GM10248 (cell line): ENCODE measurements at regions of chr2 and their contacts with region 1.

Region 1: DNA sequence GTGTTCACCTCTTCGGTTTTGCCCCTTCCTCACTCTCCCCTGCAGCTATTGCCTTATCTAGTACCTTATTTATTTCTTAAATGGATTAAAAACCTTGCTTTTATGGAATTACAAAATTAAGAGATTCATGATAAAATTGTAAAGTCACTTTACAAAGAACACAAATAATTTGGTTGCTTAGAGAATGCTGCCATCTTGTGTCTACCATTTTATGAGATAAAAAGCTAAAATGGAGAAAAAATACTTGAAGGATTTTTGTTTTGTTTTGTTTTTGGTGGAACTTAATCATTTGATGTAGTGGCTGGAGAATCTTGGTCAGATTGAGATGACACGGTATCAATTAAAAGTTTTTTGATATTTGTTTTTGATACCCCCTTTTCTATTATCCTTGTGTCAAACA is 69.6 kb downstream of the R3HDM1 start:
- DNase-seq: no peak
- CTCF ChIP-seq: no peak

Region 2: DNA sequence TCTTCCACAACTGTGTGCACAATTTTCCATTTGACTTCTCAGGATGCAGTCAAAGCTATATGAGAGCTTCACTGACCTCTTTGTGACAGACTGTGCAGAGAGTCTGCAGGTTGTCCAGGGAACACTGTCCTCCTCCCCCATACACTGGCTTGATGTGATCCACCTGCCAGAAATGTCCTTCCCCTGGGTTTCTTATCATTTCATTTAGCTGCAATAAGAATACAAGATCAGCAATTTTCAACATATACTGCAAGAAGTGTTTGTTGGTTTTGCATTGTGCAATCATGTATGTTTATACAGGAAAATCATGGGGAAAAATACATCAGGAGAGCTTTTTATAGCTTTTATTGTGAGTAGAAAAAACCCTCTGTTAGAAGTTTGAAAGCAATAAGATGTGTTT is 398.2 kb before region 1 on chr2:
- CTCF ChIA-PET with region 1: no interaction called
- POLR2A ChIA-PET with region 1: no interaction called
- DNase-seq: no peak
- CTCF ChIP-seq: no peak

Region 3: GRCh38 chr2:135585586-135585985 is 15.3 kb before region 1 on chr2:
- CTCF ChIA-PET with region 1: interaction called, 15 read pairs
- POLR2A ChIA-PET with region 1: no interaction called
- DNase-seq: no peak
- CTCF ChIP-seq: no peak

Region 4: DNA sequence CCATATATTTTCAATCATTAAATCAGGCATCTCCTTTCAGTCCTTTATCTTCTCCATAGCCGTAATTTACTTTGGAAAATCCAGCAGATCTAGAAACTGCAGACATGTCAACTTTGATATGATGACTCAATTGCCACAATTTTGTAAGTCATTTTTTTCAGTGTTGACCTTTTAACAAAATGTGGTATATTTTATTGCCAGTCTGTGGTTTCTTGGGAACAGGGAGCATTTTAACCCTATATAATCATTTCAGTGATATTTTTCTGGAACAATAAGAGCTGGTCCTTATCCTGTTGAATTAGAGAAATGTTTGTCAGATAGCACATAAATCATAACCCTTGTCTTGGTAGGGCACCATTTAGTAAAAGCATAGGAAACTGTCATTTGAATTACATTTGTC is 49.8 kb after region 1 on chr2:
- CTCF ChIA-PET with region 1: no interaction called
- POLR2A ChIA-PET with region 1: no interaction called
- DNase-seq: no peak
- CTCF ChIP-seq: no peak